Mucosa of descending colon (tissue), 3 donors: ENCODE measurements at regions of chr4 and their contacts with region 1.

Region 1: GRCh38 chr4:120718979-120719566 is 203.5 kb downstream of the PRDM5 start:
- DNase-seq: peak in 1 of 3 donors; percentile 33
- ATAC-seq: peak; percentile 68
- H3K4me3 ChIP-seq: no peak overlapping the region
- H3K4me1 ChIP-seq: no peaks in the 10 kb centered on the region
- CTCF ChIP-seq: peak; percentile 21

Region 2: GRCh38 chr4:120630427-120630826 is 88.6 kb before region 1 on chr4:
- intact Hi-C with region 1: no loop called
- DNase-seq: no peak
- ATAC-seq: no peak
- H3K4me3 ChIP-seq: no peak overlapping the region
- H3K4me1 ChIP-seq: no peaks in the 10 kb centered on the region
- CTCF ChIP-seq: no peak

Region 3: DNA sequence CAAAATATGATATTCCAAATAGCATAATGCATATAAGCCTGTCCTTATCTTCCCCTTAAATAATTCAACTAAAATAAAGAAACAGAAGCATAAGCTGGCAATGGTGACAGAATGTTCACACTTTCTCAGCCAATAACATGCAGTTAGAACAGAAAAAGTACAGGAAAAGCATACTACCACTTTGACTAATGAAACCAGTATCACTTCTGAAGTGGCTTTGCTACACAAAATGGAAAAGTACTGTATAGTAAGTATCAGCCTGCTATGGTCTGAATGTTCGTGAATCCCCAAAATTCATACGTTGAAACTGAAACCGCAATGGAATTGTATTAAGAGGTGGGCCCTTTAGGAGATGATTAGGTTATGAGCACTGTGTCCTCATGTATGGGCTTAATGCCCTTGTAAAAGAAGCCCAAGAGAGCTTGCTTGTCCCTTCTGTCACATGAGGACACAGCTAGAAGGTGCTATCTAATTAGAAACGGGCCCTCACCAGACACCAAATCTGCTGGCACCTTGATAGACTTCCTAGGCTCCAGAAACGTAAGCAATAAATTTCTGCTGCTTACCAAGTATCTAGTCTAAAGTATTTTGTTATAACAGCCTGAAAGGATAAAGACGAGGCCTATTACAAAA is 100.8 kb after region 1 on chr4:
- intact Hi-C with region 1: no loop called
- DNase-seq: no peak
- ATAC-seq: no peak
- H3K4me3 ChIP-seq: no peak overlapping the region
- H3K4me1 ChIP-seq: no peaks in the 10 kb centered on the region
- CTCF ChIP-seq: no peak

Region 4: DNA sequence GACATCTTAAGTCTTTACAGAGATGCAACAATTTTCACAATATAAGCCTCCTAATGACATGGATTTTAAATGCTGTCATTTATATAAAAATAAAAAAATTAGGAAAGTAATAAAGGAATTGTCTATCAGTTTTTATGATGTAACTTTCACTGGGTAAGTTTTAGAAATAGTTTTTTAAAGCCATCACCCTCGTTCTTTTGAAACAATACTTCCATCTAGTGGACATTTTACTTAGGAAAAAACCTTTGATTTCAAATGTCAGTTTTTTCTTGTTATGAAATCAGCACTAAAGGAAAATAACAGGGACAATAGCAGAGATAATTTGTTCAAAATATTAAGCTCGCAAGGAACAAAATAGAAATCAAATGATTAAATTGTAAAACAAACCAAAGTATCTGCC is 377.6 kb after region 1 on chr4:
- intact Hi-C with region 1: loop called in 1 of 2 experiments (anchors 10 kb)
- DNase-seq: no peak
- ATAC-seq: no peak
- H3K4me3 ChIP-seq: no peak overlapping the region
- H3K4me1 ChIP-seq: no peaks in the 10 kb centered on the region
- CTCF ChIP-seq: no peak